Ascending aorta (tissue), 2 donors: ENCODE measurements at regions of chr10 and their contacts with region 1.

Region 1: GRCh38 chr10:75111367-75111906 is at the start of gene SAMD8:
- DNase-seq: peak; percentile 93 to 99
- H3K4me3 ChIP-seq: peak within 1 kb of the TSS; percentile 75 to 91
- H3K27ac ChIP-seq: peak within 1 kb of the TSS; percentile 97 to 98
- H3K4me1 ChIP-seq: peaks cover 0 to 12% of the 10 kb centered on the region in 2 donors
- H3K27me3 ChIP-seq: no peaks in the 10 kb centered on the region
- CTCF ChIP-seq: peak in 2 of 3 experiments; percentile 14 to 34
- total RNA-seq, gene SAMD8: 16.5 TPM

Region 2: DNA sequence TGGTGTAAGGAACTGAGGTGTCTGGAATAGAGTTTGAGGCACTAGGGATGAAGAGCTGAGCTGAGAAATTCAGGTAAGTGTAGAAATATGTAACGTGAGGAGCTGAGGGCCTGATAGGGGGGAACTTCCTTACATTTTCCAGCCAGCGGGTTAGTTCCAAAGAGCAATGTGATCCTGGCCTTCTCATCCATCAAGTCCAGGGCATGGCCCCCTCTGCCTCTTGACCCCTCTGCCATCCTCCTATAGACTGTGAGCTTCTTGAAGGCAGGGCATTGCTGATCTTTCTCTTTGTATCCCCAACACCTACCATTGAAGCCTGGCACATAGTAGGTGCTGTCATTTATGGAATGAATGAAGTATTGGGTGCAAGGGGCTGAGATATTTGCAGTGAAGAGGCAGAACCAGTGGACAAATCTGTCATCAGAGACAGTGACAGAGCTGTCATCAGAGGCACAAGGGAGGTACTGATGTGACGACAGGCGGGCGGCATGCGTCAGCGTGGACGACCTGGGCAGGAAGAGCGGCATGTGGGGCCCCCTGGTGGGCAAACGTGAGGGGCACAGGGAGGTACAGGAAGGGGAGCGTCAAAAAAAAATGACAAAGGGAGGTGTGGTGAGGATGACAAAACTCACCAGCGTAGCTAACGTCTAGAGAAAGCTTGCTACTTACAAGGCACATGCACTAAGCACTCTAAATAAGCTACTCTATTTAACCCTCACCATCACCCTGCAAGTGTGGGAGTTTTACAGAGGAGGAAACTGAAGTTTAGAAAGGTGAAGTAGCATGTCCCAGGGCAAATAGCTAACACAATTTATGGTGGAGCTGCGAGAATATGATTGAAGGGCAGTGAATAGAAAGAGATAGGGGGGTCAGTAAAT is 1231.9 kb before region 1 on chr10:
- intact Hi-C with region 1: loop called (anchors 10 kb)
- DNase-seq: peak; percentile 71 to 95
- H3K4me3 ChIP-seq: no peak overlapping the region
- H3K27ac ChIP-seq: peak overlapping the region; percentile 35 to 68
- H3K4me1 ChIP-seq: peaks cover 0 to 18% of the 10 kb centered on the region in 2 donors
- H3K27me3 ChIP-seq: no peaks in the 10 kb centered on the region
- CTCF ChIP-seq: peak; percentile 91 to 99 (median 97)

Region 3: GRCh38 chr10:74176380-74177139 is 934.9 kb before region 1 on chr10:
- intact Hi-C with region 1: loop called (anchors 10 kb)
- DNase-seq: peak; percentile 90 to 98
- H3K4me3 ChIP-seq: peak overlapping the region; percentile 75 to 82
- H3K27ac ChIP-seq: peak overlapping the region; percentile 87 to 88
- H3K4me1 ChIP-seq: peaks cover 0 to 11% of the 10 kb centered on the region in 2 donors
- H3K27me3 ChIP-seq: no peaks in the 10 kb centered on the region
- CTCF ChIP-seq: no peak

Region 4: DNA sequence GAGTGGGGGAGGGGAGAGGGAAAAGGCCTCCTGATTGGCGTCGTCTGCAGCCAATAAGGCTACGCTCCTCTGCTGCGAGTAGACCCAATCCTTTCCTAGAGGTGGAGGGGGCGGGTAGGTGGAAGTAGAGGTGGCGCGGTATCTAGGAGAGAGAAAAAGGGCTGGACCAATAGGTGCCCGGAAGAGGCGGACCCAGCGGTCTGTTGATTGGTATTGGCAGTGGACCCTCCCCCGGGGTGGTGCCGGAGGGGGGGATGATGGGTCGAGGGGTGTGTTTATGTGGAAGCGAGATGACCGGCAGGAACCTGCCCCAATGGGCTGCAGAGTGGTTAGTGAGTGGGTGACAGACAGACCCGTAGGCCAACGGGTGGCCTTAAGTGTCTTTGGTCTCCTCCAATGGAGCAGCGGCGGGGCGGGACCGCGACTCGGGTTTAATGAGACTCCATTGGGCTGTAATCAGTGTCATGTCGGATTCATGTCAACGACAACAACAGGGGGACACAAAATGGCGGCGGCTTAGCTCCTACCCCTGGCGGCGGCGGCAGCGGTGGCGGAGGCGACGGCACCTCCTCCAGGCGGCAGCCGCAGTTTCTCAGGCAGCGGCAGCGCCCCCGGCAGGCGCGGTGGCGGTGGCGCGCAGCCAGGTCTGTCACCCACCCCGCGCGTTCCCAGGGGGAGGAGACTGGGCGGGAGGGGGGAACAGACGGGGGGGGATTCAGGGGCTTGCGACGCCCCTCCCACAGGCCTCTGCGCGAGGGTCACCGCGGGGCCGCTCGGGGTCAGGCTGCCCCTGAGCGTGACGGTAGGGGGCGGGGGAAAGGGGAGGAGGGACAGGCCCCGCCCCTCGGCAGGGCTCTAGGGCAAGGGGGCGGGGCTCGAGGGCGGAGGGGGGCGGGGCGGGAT is 285.0 kb before region 1 on chr10 and contains the start of gene KAT6B:
- intact Hi-C with region 1: loop called (anchors 1 kb)
- DNase-seq: peak; percentile 100
- H3K4me3 ChIP-seq: peak within 1 kb of the TSS; percentile 93 to 95
- H3K27ac ChIP-seq: peak within 1 kb of the TSS; percentile 98 to 99
- H3K4me1 ChIP-seq: peaks cover 14 to 36% of the 10 kb centered on the region in 2 donors
- H3K27me3 ChIP-seq: no peaks in the 10 kb centered on the region
- CTCF ChIP-seq: peak in 2 of 3 experiments; percentile 15 to 22
- total RNA-seq, gene KAT6B: 41.1 TPM

Region 5: GRCh38 chr10:75210282-75211006 is 99.0 kb after region 1 on chr10 and contains the start of gene VDAC2:
- intact Hi-C with region 1: loop called (anchors 2 kb)
- DNase-seq: peak; percentile 57 to 94
- H3K4me3 ChIP-seq: peak within 1 kb of the TSS; percentile 84 to 94
- H3K27ac ChIP-seq: peak within 1 kb of the TSS; percentile 98 to 100
- H3K4me1 ChIP-seq: peaks cover 10 to 23% of the 10 kb centered on the region in 2 donors
- H3K27me3 ChIP-seq: no peaks in the 10 kb centered on the region
- CTCF ChIP-seq: no peak
- total RNA-seq, gene VDAC2: 14.4 TPM

Region 6: DNA sequence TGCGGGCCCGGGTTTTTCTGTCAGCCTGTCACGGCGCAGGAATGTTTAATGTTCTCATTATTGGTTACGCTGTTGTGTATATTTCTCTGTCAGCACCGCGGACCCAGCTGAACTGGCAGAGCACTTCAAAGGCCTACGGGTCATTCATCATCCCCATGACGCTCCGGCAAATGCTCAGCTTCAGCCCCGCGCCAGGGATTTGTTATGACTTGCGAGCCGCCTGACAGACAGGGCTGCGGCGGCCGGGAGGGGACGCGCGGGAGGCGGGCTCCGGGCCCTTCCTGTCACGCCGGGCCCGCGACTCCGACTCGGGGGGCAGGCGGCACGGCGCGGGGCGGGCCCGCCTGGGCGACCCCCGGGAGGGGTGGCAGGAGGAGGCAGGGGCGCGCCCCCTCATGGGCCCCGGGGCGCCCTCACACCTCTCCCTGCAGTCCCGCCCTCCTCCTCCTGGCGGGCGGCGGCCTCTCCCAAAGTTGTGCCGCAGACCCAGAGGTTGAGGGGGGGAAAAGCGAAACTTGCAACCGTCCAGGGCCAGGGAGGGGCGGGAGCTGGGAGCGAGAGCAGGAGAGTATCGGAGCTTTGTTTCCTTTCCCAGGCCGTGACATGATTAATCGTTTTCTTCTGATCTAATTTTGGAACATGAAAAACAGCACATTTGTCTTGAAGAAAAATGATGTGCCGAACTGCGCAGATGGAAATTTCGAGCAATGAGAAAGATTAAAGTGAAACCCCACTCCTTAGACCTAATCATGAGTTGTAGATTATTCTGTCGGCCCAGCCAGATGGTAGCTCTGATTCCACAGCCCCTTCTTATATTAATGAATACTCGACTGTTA is 183.6 kb after region 1 on chr10:
- intact Hi-C with region 1: loop called (anchors 5 kb)
- DNase-seq: peak; percentile 60 to 93
- H3K4me3 ChIP-seq: peak overlapping the region; percentile 79 to 92
- H3K27ac ChIP-seq: peak overlapping the region; percentile 91 to 94
- H3K4me1 ChIP-seq: peaks cover 11 to 23% of the 10 kb centered on the region in 2 donors
- H3K27me3 ChIP-seq: no peaks in the 10 kb centered on the region
- CTCF ChIP-seq: peak in 2 of 3 experiments; percentile 20 to 51

Region 7: DNA sequence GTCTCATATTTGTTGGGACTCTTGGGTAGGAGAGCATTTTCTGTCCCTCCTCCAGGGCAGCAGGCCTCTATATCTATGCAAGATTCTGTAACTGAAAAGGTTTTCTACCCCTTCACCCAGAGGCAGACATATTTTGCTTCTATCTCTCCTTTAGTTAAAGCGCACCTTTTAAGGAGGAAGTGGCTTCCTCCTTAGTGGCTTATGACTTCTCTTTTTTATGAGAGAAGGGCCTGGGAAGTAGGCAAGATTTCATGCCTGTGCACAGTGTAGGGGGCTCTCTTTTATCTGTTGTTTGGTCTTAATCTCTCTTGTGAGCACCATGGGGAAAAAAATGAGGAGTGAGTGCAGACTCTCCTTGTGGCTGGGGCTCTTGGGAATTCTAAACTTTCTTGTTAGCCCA is 442.1 kb after region 1 on chr10:
- intact Hi-C with region 1: no loop called
- DNase-seq: no peak
- H3K4me3 ChIP-seq: no peak overlapping the region
- H3K27ac ChIP-seq: no peak overlapping the region
- H3K4me1 ChIP-seq: peaks cover 0 to 1% of the 10 kb centered on the region in 2 donors
- H3K27me3 ChIP-seq: no peaks in the 10 kb centered on the region
- CTCF ChIP-seq: no peak